GM12878 (cell line): ENCODE measurements at regions of chr1 and their contacts with region 1.

Region 1: GRCh38 chr1:197924516-197925123 is 7.4 kb downstream of the LHX9 start:
- DNase-seq: no peak
- ATAC-seq: peak; percentile 81
- H3K4me3 ChIP-seq: no peak overlapping the region
- H3K27ac ChIP-seq: no peak overlapping the region
- H3K4me1 ChIP-seq: no peaks in the 10 kb centered on the region
- H3K27me3 ChIP-seq: peaks cover 3 to 4% of the 10 kb centered on the region in 2 experiments; a peak in 3 of 4 replicates
- CTCF ChIP-seq: peak; percentile 69 to 73 (median 70)
- EP300 ChIP-seq: no peak
- POLR2A ChIP-seq: no peak
- RAD21 ChIP-seq: peak; percentile 91

Region 2: DNA sequence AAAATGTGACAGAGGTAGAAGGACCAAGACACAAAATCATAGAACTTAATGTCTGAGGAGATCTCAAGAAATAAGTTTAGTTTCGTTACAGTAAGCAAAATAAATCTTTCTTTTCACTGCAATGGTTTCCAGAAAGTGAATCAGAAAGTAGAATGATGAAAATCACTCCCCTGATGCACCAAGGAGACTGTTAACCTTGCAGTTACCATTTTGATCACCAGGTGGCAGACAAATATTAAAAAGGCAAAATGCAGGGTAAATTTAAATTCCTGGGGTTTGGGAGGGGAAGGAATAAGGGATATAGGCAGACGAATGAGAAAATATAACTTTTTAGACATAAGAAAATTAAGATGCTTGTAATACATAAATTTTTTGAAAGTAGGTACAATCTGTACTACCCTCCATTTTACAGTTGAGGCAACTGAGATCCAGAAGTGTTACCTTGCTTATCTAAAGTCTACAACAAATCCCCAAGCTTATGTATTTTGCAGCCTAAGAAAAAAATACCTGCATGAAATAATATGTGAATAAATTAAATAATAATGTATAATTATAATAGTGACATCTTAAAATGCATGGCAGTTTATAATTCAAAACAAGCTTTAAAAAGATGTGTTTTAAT is 403.4 kb before region 1 on chr1:
- CTCF ChIA-PET with region 1: interaction called, 13 read pairs
- POLR2A ChIA-PET with region 1: no interaction called
- RAD21 ChIA-PET with region 1: interaction called, 5 read pairs
- SMC1A ChIA-PET with region 1: interaction called, 5 read pairs
- in situ Hi-C with region 1: loop called (anchors 5 kb)
- intact Hi-C with region 1: loop called (anchors 1 kb)
- DNase-seq: no peak
- ATAC-seq: peak; percentile 75
- H3K4me3 ChIP-seq: no peak overlapping the region
- H3K27ac ChIP-seq: no peak overlapping the region
- H3K4me1 ChIP-seq: no peaks in the 10 kb centered on the region
- H3K27me3 ChIP-seq: no peaks in the 10 kb centered on the region
- CTCF ChIP-seq: peak; percentile 51 to 64 (median 62)
- EP300 ChIP-seq: no peak
- POLR2A ChIP-seq: no peak
- RAD21 ChIP-seq: peak; percentile 63

Region 3: GRCh38 chr1:197526736-197527371 is 397.8 kb before region 1 on chr1:
- CTCF ChIA-PET with region 1: interaction called, 10 read pairs
- POLR2A ChIA-PET with region 1: no interaction called
- RAD21 ChIA-PET with region 1: interaction called, 5 read pairs
- SMC1A ChIA-PET with region 1: no interaction called
- in situ Hi-C with region 1: loop called (anchors 5 kb)
- intact Hi-C with region 1: loop called (anchors 1 kb)
- DNase-seq: no peak
- ATAC-seq: no peak
- H3K4me3 ChIP-seq: no peak overlapping the region
- H3K27ac ChIP-seq: no peak overlapping the region
- H3K4me1 ChIP-seq: no peaks in the 10 kb centered on the region
- H3K27me3 ChIP-seq: no peaks in the 10 kb centered on the region
- CTCF ChIP-seq: peak in 2 of 3 experiments; percentile 29 to 39; a peak in 3 of 6 replicates
- EP300 ChIP-seq: no peak
- POLR2A ChIP-seq: no peak
- RAD21 ChIP-seq: peak; percentile 35; the same call in 1 of the 2 replicates

Region 4: GRCh38 chr1:197614916-197615692 is 309.5 kb before region 1 on chr1:
- CTCF ChIA-PET with region 1: interaction called, 9 read pairs
- POLR2A ChIA-PET with region 1: no interaction called
- RAD21 ChIA-PET with region 1: interaction called, 3 read pairs
- SMC1A ChIA-PET with region 1: interaction called, 3 read pairs
- in situ Hi-C with region 1: no loop called
- intact Hi-C with region 1: loop called (anchors 2 kb)
- DNase-seq: peak; percentile 5
- ATAC-seq: peak; percentile 87
- H3K4me3 ChIP-seq: no peak overlapping the region
- H3K27ac ChIP-seq: no peak overlapping the region
- H3K4me1 ChIP-seq: no peaks in the 10 kb centered on the region
- H3K27me3 ChIP-seq: no peaks in the 10 kb centered on the region
- CTCF ChIP-seq: peak; percentile 52 to 61 (median 56); a peak in 5 of 6 replicates
- EP300 ChIP-seq: no peak
- POLR2A ChIP-seq: no peak
- RAD21 ChIP-seq: peak; percentile 70

Region 5: DNA sequence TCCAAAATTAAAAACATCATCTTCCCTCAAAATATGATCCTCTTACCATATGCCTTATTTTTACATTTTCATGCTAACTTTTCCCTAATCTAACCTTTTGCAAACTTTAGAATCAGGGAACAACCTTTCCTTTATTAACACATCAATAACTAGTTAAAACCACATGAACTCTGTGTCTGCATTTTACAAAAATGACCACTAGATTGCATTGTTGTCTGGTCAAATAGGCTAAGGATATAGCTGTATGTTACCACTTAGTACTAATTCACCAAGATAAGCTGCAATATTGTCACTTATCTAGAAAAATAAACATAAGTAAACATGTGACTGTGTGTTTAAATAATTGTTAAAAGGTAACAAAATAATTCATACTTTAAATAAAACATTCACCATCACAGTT is 231.7 kb before region 1 on chr1:
- CTCF ChIA-PET with region 1: interaction called, 3 read pairs
- POLR2A ChIA-PET with region 1: no interaction called
- RAD21 ChIA-PET with region 1: no interaction called
- SMC1A ChIA-PET with region 1: interaction called, 4 read pairs
- in situ Hi-C with region 1: no loop called
- intact Hi-C with region 1: loop called (anchors 5 kb)
- DNase-seq: no peak
- ATAC-seq: peak; percentile 60; the same call in 2 of the 3 replicates
- H3K4me3 ChIP-seq: no peak overlapping the region
- H3K27ac ChIP-seq: no peak overlapping the region
- H3K4me1 ChIP-seq: no peaks in the 10 kb centered on the region
- H3K27me3 ChIP-seq: no peaks in the 10 kb centered on the region
- CTCF ChIP-seq: peak in 2 of 3 experiments; percentile 36 to 42; a peak in 2 of 6 replicates
- EP300 ChIP-seq: no peak
- POLR2A ChIP-seq: no peak
- RAD21 ChIP-seq: peak; percentile 68

Region 6: DNA sequence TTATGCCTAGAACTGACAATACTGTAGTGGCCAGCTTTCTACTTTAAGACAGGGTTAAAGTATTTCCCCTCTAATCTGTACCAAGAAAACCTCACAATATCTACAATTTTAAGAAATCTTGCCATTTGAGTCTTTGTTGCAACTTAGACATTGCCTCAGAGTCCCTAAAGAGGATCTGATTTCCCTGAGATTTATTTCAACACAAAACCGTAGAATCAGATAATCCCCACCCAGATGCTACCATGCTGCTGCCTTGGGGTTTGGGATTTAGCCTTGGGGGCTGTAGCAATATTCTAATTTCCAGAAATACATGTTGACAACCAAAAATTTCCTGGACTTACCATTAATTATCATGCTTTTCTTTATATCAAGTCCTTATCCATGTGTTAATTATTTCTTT is 99.1 kb before region 1 on chr1:
- CTCF ChIA-PET with region 1: no interaction called
- POLR2A ChIA-PET with region 1: no interaction called
- RAD21 ChIA-PET with region 1: no interaction called
- SMC1A ChIA-PET with region 1: no interaction called
- in situ Hi-C with region 1: no loop called
- intact Hi-C with region 1: no loop called
- DNase-seq: no peak
- ATAC-seq: no peak
- H3K4me3 ChIP-seq: no peak overlapping the region
- H3K27ac ChIP-seq: no peak overlapping the region
- H3K4me1 ChIP-seq: no peaks in the 10 kb centered on the region
- H3K27me3 ChIP-seq: no peaks in the 10 kb centered on the region
- CTCF ChIP-seq: no peak
- EP300 ChIP-seq: no peak
- POLR2A ChIP-seq: no peak
- RAD21 ChIP-seq: no peak

Region 7: GRCh38 chr1:198141668-198142351 is 217.2 kb after region 1 on chr1:
- CTCF ChIA-PET with region 1: no interaction called
- POLR2A ChIA-PET with region 1: no interaction called
- RAD21 ChIA-PET with region 1: no interaction called
- SMC1A ChIA-PET with region 1: no interaction called
- in situ Hi-C with region 1: no loop called
- intact Hi-C with region 1: no loop called
- DNase-seq: no peak
- ATAC-seq: no peak; the same call in 2 of the 3 replicates
- H3K4me3 ChIP-seq: no peak overlapping the region
- H3K27ac ChIP-seq: no peak overlapping the region
- H3K4me1 ChIP-seq: no peaks in the 10 kb centered on the region
- H3K27me3 ChIP-seq: no peaks in the 10 kb centered on the region
- CTCF ChIP-seq: no peak
- EP300 ChIP-seq: no peak
- POLR2A ChIP-seq: no peak
- RAD21 ChIP-seq: no peak